GM10248 (cell line): ENCODE measurements at regions of chr6 and their contacts with region 1.

Region 1: DNA sequence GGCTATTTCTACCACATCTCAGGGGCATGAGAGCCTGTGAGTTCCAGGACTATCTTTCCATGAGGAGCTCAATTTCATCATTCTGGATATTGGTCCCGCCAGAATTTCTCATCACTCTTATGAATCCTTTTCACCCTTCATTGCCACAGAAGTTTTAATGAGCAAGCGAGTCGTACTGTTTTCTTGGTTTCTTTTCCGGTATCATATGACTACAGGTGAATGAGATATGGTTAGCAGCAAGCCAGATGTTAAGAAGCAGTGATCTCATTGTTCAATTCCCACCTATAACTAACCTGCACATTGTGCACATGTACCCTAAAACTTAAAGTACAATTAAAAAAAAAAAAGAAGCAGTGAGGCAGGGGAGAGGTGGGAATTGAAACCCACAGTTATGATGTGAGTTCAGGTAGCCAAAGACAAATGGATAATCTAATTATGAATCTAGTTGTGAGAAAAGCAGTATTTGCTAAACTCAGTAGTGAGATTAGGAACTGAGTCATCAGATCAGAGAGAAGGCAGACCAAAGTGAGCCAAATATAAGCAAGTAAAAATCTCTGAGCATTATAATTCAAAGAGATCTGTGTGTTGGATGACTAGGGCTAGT is 78.0 kb upstream of the ELOVL5 start:
- DNase-seq: peak; percentile 40
- CTCF ChIP-seq: no peak

Region 2: GRCh38 chr6:53437557-53438202 is 10.9 kb after region 1 on chr6:
- CTCF ChIA-PET with region 1: interaction called, 19 read pairs
- POLR2A ChIA-PET with region 1: no interaction called
- DNase-seq: peak; percentile 37
- CTCF ChIP-seq: peak; percentile 56

Region 3: GRCh38 chr6:53593001-53593488 is 166.3 kb after region 1 on chr6:
- CTCF ChIA-PET with region 1: no interaction called
- POLR2A ChIA-PET with region 1: no interaction called
- DNase-seq: no peak
- CTCF ChIP-seq: no peak